Colonic mucosa (tissue), 4 donors: ENCODE measurements at regions of chr16 and their contacts with region 1.

Region 1: DNA sequence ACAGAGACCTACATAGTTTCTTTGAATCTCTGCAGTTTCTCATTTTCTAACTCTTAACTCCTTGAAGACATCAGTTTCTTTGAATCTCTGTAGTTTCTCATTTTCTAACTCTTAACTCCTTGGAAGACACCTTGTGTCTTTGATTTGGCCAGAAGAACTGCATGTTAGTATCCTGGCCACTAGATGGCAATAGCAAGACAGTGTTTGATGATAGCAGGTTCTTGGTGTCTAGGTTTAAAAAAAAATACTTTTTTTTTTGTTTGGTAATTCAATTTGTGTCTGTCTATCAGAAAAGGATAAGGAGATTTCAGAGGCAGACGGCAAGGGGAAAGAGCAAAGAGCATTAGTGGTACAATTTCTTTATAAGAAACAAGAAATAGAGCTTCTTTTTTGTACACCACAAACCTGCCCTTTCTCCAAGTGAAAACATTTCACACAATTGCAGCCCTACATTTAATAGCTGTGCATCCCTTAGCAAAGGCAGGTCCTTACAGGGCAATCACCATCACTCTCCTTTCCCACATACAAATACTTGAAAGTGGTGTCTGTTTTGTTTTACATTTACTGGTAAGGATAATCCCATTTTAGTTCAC is 1324.9 kb upstream of the CDH8 start:
- DNase-seq: peak; percentile 22
- H3K4me3 ChIP-seq: no peak overlapping the region
- H3K27ac ChIP-seq: no peak overlapping the region
- H3K4me1 ChIP-seq: no peaks in the 10 kb centered on the region
- H3K27me3 ChIP-seq: no peaks in the 10 kb centered on the region
- CTCF ChIP-seq: peak; percentile 67

Region 2: GRCh38 chr16:65117811-65118448 is 1756.8 kb after region 1 on chr16:
- intact Hi-C with region 1: loop called (anchors 10 kb)
- DNase-seq: peak; percentile 73
- H3K4me3 ChIP-seq: no peak overlapping the region
- H3K27ac ChIP-seq: peak overlapping the region; percentile 9
- H3K4me1 ChIP-seq: peaks cover 4% of the 10 kb centered on the region
- H3K27me3 ChIP-seq: peaks cover 37% of the 10 kb centered on the region
- CTCF ChIP-seq: peak; percentile 91